ENCODE measurements at regions of chr13 and their contacts with region 1.

Region 1: GRCh38 chr13:91247768-91248167 is 99.7 kb upstream of the MIR17HG start:
- DNase-seq: no peak
- ATAC-seq: no peak
- H3K4me3 ChIP-seq: no peak overlapping the region
- H3K27ac ChIP-seq: no peak overlapping the region
- H3K4me1 ChIP-seq: no peaks in the 10 kb centered on the region
- H3K27me3 ChIP-seq: no peaks in the 10 kb centered on the region
- CTCF ChIP-seq: peak; percentile 20; the same call in 1 of the 2 replicates

Region 2: GRCh38 chr13:91076830-91077229 is 170.9 kb before region 1 on chr13:
- CTCF ChIA-PET with region 1: interaction called, 3 read pairs
- POLR2A ChIA-PET with region 1: no interaction called
- in situ Hi-C with region 1: no loop called
- intact Hi-C with region 1: loop called (anchors 2 kb)
- DNase-seq: no peak
- ATAC-seq: no peak
- H3K4me3 ChIP-seq: no peak overlapping the region
- H3K27ac ChIP-seq: no peak overlapping the region
- H3K4me1 ChIP-seq: no peaks in the 10 kb centered on the region
- H3K27me3 ChIP-seq: no peaks in the 10 kb centered on the region
- CTCF ChIP-seq: no peak